ENCODE measurements at regions of chr3 and their contacts with region 1.

Region 1: DNA sequence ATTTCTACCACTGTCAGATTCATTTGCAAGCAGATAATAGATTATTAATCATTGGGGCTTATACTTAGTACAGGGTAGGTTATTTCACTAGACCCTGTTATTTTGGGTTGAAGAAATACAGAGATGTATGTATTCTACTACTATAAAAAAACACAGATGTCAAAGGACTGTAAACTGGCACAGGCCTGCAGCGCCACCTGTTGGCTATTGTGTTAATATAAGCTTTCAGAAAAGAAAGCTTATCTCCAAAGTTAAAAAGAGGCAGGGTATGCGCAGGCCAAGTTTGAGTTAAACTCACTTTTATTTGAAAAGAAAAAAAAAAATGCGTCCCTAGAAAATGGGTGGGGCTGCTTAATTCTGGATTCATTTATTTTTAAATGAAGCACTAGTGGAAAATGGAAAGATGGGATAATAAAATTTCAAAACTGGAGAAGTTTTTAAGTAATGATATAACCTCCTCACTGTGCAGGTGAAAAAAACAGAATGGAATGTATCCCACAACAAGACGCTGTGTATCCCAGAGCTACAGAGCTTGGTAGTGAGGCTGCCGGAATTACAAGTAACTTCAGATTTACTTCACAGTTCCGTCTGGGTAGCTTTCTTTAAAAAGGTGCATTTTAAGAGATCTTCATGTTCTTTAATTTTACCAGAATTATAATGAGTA is 407.2 kb upstream of the TGFBR2 start:
- DNase-seq: no peak
- H3K4me3 ChIP-seq: no peak overlapping the region
- H3K27me3 ChIP-seq: no peaks in the 10 kb centered on the region
- CTCF ChIP-seq: peak; percentile 75

Region 2: DNA sequence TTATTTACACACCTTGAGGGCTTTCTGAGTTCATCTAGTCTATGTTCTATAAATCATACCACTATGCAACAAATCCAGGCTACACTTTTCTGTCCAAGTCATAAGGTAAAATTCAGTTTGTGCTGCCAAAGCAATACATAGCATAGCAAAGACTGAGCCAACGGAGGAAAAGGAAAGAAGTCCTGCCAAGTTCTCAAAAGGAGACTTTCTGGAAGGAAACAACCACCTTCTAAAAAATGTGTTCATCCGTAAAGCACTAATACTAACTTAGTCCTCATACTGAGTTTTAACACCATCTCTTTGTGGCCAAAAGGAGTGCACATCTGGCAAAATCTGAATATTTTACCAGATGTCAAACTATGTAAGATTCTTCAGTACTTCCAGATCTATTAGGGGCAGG is 298.1 kb before region 1 on chr3:
- CTCF ChIA-PET with region 1: no interaction called
- POLR2A ChIA-PET with region 1: no interaction called
- DNase-seq: no peak
- H3K4me3 ChIP-seq: no peak overlapping the region
- H3K27me3 ChIP-seq: no peaks in the 10 kb centered on the region
- CTCF ChIP-seq: no peak

Region 3: DNA sequence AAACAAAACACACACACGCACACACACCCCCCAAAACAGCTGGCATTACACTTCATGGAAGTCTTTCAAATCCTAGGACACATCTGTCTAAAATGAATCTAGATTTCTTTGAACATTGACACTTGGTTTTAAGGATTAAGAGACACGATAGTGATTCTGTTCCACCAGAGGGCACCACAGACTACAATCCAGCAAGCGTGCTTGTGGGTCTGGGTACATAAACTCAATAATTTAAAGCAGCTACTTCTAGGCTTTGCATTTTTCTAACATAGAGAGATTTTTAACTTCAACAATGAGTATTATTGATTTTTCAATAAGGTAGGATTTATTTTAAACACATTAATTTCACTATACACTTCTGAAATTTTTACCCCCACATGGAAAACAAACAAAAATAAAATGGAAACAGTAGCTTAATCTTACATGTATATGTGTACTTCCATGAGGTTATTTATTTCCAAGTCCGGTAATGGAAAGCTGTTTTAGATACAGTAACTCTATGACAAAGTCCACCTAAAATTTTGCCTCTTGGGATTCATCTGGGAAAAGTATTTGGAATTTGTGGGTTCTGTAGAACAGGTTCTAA is 156.9 kb before region 1 on chr3:
- CTCF ChIA-PET with region 1: interaction called, 78 read pairs
- POLR2A ChIA-PET with region 1: interaction called, 5 read pairs
- DNase-seq: peak; percentile 10
- H3K4me3 ChIP-seq: no peak overlapping the region
- H3K27me3 ChIP-seq: no peaks in the 10 kb centered on the region
- CTCF ChIP-seq: peak; percentile 70

Region 4: DNA sequence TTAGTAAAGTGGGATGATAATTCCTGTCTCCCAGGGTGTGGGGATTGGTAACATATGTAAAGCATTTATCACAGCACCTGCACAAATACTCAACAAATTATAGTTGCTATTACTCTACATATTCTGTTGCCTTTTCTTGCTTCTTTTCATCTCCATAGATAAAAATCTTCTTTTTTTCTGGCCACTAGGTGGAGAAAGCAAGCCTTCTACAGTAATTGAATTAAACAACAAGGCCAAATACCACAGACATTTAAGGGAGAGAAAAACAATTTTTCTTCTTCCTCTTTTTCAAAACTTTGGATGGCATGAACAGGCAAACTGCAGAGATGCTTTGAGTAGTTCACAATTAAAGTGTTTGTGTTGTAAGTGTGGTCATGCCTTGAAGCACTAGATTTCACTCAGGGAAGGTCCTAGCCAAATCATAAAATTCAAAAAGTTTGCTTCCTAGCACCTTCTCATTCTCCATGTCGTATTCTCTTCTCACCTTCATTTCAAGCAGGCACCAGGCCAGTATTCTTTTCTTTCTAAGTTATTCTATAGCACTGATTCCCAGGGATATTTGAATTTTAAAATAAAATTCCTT is 86.2 kb before region 1 on chr3:
- CTCF ChIA-PET with region 1: interaction called, 39 read pairs
- POLR2A ChIA-PET with region 1: interaction called, 3 read pairs
- DNase-seq: no peak
- H3K4me3 ChIP-seq: no peak overlapping the region
- H3K27me3 ChIP-seq: no peaks in the 10 kb centered on the region
- CTCF ChIP-seq: peak; percentile 61

Region 5: DNA sequence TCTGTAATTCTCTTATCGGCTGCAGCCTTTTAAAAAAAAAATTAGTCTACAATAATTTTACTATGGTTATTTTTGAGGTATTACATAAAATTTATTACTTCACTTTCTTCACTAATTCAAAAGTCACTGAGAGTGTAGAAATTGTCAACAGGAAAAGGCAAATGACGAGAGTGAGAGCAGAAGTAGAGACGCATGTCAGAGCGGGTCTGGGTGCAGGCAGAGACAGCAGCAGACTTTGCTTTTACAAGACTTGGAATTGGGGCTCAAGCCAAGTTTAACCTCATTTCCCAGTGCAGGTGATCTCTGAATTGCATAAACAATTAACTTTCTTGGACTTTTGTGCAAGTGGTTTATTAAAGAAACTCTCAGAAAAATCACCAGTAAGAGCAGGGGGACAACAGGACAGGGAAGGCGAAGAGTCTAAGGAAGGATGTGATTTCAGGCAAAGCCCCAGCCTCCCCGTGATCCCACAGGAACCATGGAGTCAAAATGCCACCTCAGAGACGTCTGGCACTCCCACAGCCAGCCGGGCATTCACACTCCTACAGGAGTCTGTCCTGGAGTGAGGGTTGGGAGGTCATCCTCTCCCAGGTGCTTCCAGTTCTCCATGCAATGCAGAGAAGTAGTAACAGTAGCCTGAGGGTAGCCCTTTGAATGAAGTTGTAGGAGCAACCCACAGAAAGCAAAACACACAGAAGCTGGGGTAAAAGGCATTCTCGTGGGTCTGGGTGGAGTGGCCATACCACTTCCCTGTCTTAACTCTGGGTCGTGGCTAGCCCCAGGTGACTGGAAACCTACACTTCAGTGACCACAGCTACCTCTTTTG is 133.2 kb after region 1 on chr3:
- CTCF ChIA-PET with region 1: no interaction called
- POLR2A ChIA-PET with region 1: no interaction called
- DNase-seq: no peak
- H3K4me3 ChIP-seq: no peak overlapping the region
- H3K27me3 ChIP-seq: no peaks in the 10 kb centered on the region
- CTCF ChIP-seq: no peak

Measured in BJ (cell line).